Activated B cell treated with CpG ODN at 0.5 μM for 24 hours (primary cell): ENCODE measurements at regions of chr1 and their contacts with region 1.

Region 1: DNA sequence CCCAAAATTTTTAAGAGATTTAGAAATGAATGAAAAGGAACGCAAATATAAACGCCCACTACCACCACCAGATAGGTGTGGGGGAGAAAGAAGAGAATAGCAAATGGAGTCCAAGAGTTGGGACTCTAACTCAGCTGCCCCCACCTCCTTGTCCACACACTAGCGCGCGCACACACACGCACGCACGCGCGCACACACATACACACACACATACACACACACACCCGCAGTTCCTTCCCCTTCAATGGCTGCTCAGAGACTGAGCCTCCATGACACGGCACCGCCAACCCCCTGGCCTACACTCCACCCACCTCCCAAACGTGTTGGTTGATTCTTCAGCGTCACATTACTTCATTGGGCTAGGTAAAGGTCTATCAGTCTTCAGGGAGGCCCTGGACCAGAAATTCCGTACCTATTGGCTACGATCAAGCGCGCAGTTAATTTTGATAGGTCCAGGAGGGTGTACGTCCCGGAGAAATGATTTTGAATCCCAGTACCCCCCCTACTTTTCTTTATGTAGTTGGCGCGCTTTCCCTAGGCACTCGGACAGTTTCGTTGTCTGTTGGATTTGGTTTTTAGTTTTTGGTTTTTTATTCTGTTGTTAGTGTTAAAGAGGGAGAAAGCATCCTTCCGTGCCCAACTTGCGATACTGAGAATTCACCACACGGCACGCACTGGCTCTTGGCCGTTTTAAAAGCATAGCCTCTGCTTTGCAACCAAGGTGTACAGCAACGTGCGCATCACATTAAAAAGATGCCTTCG is at the start of gene ANP32E:
- DNase-seq: peak; percentile 82
- ATAC-seq: peak; percentile 88
- H3K4me3 Mint-ChIP-seq: no peak within 1 kb of the TSS
- H3K27ac Mint-ChIP-seq: no peak within 1 kb of the TSS
- H3K4me1 Mint-ChIP-seq: peaks cover 22% of the 10 kb centered on the region
- H3K27me3 Mint-ChIP-seq: peaks cover 2% of the 10 kb centered on the region
- CTCF ChIP-seq: no peak
- total RNA-seq, gene ANP32E: 70.5 and 84.3 TPM in 2 replicates

Region 2: GRCh38 chr1:149997585-149998262 is 238.3 kb before region 1 on chr1:
- CTCF ChIA-PET with region 1: no interaction called
- POLR2A ChIA-PET with region 1: no interaction called
- intact Hi-C with region 1: no loop called
- DNase-seq: no peak
- ATAC-seq: peak; percentile 86
- H3K4me3 Mint-ChIP-seq: peak overlapping the region; percentile 48
- H3K27ac Mint-ChIP-seq: peak overlapping the region; percentile 47
- H3K4me1 Mint-ChIP-seq: peaks cover 39% of the 10 kb centered on the region
- H3K27me3 Mint-ChIP-seq: peaks cover 38% of the 10 kb centered on the region
- CTCF ChIP-seq: no peak

Region 3: DNA sequence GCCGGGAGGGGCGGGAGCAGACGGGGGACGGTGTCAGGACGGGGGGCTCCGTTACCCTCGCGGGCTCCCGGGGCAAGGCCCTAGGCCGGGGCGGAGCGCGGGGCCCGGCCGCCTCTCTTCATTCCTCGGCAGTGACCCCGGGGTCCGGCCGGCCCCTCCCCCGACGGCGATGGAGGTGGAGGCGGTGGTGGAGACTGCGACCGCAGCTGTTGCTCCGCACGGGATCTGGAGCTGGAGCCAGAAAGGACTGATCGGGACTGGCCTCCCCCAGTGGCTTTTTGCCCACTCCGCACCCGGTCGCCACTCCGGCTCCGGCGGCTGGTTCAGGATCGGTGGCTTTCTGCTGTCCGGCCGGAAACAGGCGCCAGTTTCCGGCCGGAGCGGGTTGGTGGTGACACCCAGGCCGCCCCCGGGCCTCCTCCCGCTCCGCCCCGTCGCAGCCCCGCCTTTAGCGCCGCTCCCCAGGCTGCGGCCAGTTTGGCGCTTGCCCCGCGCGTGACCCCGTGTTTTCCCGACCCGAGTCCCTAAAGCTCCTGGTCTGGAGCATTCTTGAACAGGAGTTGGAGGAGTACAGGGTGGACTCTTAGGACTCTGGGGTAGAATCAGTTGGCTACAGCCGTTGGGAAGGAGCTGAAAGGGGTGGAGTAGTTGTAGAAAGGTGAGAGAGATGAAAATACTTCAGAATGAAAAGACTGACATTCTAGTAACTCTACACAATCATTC is 225.5 kb before region 1 on chr1 and contains the start of gene OTUD7B:
- CTCF ChIA-PET with region 1: no interaction called
- POLR2A ChIA-PET with region 1: interaction called, 13 read pairs
- intact Hi-C with region 1: no loop called
- DNase-seq: peak; percentile 67
- ATAC-seq: peak; percentile 89
- H3K4me3 Mint-ChIP-seq: peak within 1 kb of the TSS; percentile 93
- H3K27ac Mint-ChIP-seq: peak within 1 kb of the TSS; percentile 68
- H3K4me1 Mint-ChIP-seq: peaks cover 15% of the 10 kb centered on the region
- H3K27me3 Mint-ChIP-seq: peaks cover 47% of the 10 kb centered on the region
- CTCF ChIP-seq: no peak
- total RNA-seq, gene OTUD7B: 4.3 and 4.8 TPM in 2 replicates

Region 4: DNA sequence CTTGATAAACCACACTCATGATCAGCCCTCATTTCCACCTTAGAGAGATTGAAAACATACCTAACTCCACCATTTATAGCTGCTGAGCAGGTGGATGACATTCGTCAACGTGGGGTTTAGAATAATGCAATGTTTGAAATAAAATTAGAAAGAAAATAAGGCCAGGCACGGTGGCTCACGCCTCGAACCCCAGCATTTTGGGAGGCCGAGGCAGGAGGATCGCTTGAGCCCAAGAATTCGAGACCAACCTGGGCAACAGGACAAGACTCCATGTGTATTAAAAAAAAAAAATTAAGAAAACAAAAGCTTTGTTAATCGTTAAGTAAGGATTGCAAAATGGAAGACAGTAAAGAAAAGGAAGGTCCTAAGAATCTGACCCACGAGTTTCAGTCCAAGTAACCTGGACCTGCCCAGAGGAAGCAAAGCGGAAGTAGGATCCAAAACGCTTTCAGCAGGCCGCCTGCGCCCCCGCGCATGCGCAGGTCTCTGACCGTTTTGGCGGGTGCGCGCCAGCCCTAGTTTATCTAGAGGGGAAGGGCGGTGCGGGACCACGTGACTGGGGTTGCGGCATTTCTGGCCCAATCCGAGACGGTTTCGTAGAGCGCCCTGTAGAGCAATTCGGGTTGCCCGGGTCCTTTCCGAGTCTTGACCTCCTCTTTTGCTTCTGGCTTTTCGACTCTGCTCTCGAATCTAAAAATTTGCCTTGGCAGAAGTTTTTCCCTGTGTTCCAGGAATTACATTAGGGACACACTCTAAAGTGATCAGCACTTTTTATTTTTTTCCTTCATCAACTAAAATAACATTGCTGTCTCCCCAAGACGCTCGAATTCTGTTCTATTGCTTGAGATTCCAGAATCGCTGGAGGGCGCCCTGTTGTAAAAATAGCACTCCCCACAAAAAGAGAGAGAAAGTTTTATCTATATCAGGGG is 22.6 kb before region 1 on chr1:
- CTCF ChIA-PET with region 1: no interaction called
- POLR2A ChIA-PET with region 1: interaction called, 28 read pairs
- intact Hi-C with region 1: loop called (anchors 1 kb)
- DNase-seq: peak; percentile 77
- ATAC-seq: peak; percentile 99
- H3K4me3 Mint-ChIP-seq: peak overlapping the region; percentile 90
- H3K27ac Mint-ChIP-seq: peak overlapping the region; percentile 94
- H3K4me1 Mint-ChIP-seq: peaks cover 15% of the 10 kb centered on the region
- H3K27me3 Mint-ChIP-seq: no peaks in the 10 kb centered on the region
- CTCF ChIP-seq: no peak

Region 5: GRCh38 chr1:150268705-150269403 is 32.8 kb after region 1 on chr1 and contains the start of gene APH1A:
- CTCF ChIA-PET with region 1: no interaction called
- POLR2A ChIA-PET with region 1: interaction called, 12 read pairs
- intact Hi-C with region 1: loop called (anchors 1 kb)
- DNase-seq: peak; percentile 86
- ATAC-seq: peak; percentile 97
- H3K4me3 Mint-ChIP-seq: peak within 1 kb of the TSS; percentile 100
- H3K27ac Mint-ChIP-seq: peak within 1 kb of the TSS; percentile 94
- H3K4me1 Mint-ChIP-seq: peaks cover 32% of the 10 kb centered on the region
- H3K27me3 Mint-ChIP-seq: peaks cover 4% of the 10 kb centered on the region
- CTCF ChIP-seq: no peak
- total RNA-seq, gene APH1A: 145 TPM in 2 replicates

Region 6: DNA sequence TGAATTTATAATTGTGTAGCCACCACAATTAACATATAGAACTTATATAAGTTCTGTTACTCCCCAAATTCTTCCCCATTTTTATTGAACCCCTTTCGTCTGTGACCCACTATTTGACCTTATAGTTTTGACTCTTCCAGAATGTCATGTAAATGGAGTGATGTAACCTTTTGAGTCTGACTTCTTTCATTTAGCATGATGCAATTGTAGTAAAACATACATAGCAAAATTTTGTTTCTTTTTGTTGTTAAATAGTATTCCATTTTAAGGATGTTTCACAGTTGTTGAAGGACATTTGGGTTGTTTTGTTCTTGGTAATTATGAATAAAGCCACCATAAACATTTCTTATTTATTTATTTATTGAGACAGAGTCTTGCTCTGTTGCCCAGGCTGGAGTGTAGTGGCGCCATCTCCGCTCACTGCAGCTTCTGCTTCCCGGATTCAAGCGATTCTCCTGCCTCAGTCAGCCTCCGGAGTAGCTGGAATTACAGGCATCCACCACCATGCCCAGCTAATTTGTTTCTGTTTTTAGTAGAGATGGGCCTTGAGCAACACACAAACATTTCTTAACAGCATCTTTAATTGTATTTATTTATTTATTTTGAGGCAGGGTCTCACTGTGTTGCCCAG is 161.5 kb after region 1 on chr1:
- CTCF ChIA-PET with region 1: no interaction called
- POLR2A ChIA-PET with region 1: no interaction called
- intact Hi-C with region 1: no loop called
- DNase-seq: no peak
- ATAC-seq: no peak
- H3K4me3 Mint-ChIP-seq: no peak overlapping the region
- H3K27ac Mint-ChIP-seq: no peak overlapping the region
- H3K4me1 Mint-ChIP-seq: peaks cover 18% of the 10 kb centered on the region
- H3K27me3 Mint-ChIP-seq: no peaks in the 10 kb centered on the region
- CTCF ChIP-seq: no peak

Region 7: GRCh38 chr1:150979092-150980056 is 743.3 kb after region 1 on chr1:
- CTCF ChIA-PET with region 1: no interaction called
- POLR2A ChIA-PET with region 1: no interaction called
- intact Hi-C with region 1: loop called (anchors 10 kb)
- DNase-seq: peak; percentile 72
- ATAC-seq: peak; percentile 59
- H3K4me3 Mint-ChIP-seq: peak overlapping the region; percentile 69
- H3K27ac Mint-ChIP-seq: peak overlapping the region; percentile 57
- H3K4me1 Mint-ChIP-seq: peaks cover 35% of the 10 kb centered on the region
- H3K27me3 Mint-ChIP-seq: no peaks in the 10 kb centered on the region
- CTCF ChIP-seq: peak; percentile 100